ENCODE measurements at regions of chr1 and their contacts with region 1.

Region 1: GRCh38 chr1:223631473-223631872 is 34.0 kb downstream of the CAPN8 start:
- DNase-seq: peak; percentile 79
- ATAC-seq: peak; percentile 91
- H3K4me3 ChIP-seq: no peak overlapping the region
- H3K27ac ChIP-seq: no peak overlapping the region
- H3K4me1 ChIP-seq: peaks cover 21% of the 10 kb centered on the region
- H3K27me3 ChIP-seq: no peaks in the 10 kb centered on the region
- CTCF ChIP-seq: peak; percentile 56

Region 2: DNA sequence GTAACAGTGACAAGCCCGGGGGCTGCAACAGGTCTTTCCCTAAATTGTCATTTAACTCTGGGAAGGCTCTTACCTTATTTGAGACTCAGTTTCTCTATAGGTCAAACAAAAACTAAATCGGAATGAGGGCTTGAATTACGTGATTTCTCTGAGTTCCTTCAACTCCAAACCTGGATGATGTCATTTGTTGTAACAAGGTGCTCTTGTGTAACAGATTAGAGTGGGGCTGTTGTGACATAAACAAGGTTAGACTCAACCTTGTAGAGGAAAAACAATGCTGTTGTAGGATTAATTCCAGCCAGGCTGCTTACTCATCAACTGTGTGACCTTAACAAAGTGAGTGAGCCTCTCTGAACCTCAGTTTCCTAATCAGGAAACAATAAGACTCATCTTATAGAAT is 341.9 kb before region 1 on chr1:
- CTCF ChIA-PET with region 1: no interaction called
- POLR2A ChIA-PET with region 1: no interaction called
- intact Hi-C with region 1: no loop called
- DNase-seq: no peak
- ATAC-seq: no peak
- H3K4me3 ChIP-seq: no peak overlapping the region
- H3K27ac ChIP-seq: no peak overlapping the region
- H3K4me1 ChIP-seq: no peaks in the 10 kb centered on the region
- H3K27me3 ChIP-seq: peaks cover 49% of the 10 kb centered on the region
- CTCF ChIP-seq: no peak

Region 3: DNA sequence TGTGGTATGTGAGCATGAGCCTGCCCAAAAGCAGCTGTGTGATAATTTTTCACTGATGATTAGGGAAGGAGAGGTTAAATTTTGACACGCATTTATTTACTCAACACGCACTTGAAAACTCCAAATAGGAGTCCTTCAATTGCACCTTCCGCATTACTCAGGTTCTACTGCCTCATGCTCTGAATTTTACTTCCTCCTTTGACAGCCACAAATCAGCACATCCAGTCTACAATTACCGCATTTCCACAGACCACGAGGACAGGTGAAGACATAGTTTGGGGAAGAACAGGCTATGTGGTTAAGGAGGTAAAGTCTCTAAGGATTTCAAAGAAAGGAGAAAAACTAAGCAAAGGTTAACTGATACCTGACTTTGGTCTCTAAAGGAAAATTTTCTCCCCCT is 31.5 kb after region 1 on chr1:
- CTCF ChIA-PET with region 1: no interaction called
- POLR2A ChIA-PET with region 1: no interaction called
- intact Hi-C with region 1: loop called (anchors 2 kb)
- DNase-seq: no peak
- ATAC-seq: no peak
- H3K4me3 ChIP-seq: no peak overlapping the region
- H3K27ac ChIP-seq: no peak overlapping the region
- H3K4me1 ChIP-seq: peaks cover 80% of the 10 kb centered on the region
- H3K27me3 ChIP-seq: no peaks in the 10 kb centered on the region
- CTCF ChIP-seq: no peak

Measured in PC-3 (cell line).